CD8-positive, alpha-beta T cell (primary cell): ENCODE measurements at regions of chr7 and their contacts with region 1.

Region 1: DNA sequence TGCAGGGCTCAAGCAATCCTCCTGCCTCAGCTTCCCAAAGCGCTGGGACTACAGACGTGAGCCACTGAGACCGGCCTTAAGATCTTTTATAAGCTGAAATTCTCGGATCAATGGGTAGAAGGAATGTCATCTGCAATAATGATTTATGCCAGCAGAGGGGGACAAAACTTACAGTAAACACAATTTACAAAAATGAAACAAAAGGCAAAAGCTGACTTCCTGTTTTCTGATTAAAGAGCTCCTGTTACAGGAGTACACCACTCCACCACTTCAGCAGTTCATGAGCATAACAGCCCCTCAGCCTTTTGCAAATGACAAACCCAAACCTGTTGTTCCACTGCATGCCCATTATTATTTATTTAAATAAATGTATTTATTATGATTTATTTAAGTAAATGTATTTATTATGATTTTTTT is 88.5 kb upstream of the ATP6V0A4 start:
- DNase-seq: peak in 6 of 9 experiments; percentile 15 to 84 (median 50)
- ATAC-seq: peak; percentile 93
- H3K4me3 ChIP-seq: no peak overlapping the region
- H3K4me3 Mint-ChIP-seq: peak overlapping the region; percentile 20
- H3K27ac ChIP-seq: peak overlapping the region in 1 of 2 experiments; percentile 5
- H3K27ac Mint-ChIP-seq: peak overlapping the region; percentile 78
- H3K4me1 ChIP-seq: peaks cover 3% of the 10 kb centered on the region
- H3K4me1 Mint-ChIP-seq: peaks cover 12% of the 10 kb centered on the region
- H3K27me3 ChIP-seq: no peaks in the 10 kb centered on the region
- H3K27me3 Mint-ChIP-seq: no peaks in the 10 kb centered on the region
- CTCF ChIP-seq: peak; percentile 72

Region 2: GRCh38 chr7:138875794-138876193 is 10.7 kb before region 1 on chr7:
- CTCF ChIA-PET with region 1: interaction called, 12 read pairs
- POLR2A ChIA-PET with region 1: interaction called, 4 read pairs
- intact Hi-C with region 1: no loop called
- DNase-seq: peak; percentile 21 to 90 (median 61)
- ATAC-seq: peak; percentile 96
- H3K4me3 ChIP-seq: no peak overlapping the region
- H3K4me3 Mint-ChIP-seq: no peak overlapping the region
- H3K27ac ChIP-seq: no peak overlapping the region
- H3K27ac Mint-ChIP-seq: peak overlapping the region; percentile 64
- H3K4me1 ChIP-seq: peaks cover 11% of the 10 kb centered on the region
- H3K4me1 Mint-ChIP-seq: peaks cover 15% of the 10 kb centered on the region
- H3K27me3 ChIP-seq: no peaks in the 10 kb centered on the region
- H3K27me3 Mint-ChIP-seq: no peaks in the 10 kb centered on the region
- CTCF ChIP-seq: no peak

Region 3: DNA sequence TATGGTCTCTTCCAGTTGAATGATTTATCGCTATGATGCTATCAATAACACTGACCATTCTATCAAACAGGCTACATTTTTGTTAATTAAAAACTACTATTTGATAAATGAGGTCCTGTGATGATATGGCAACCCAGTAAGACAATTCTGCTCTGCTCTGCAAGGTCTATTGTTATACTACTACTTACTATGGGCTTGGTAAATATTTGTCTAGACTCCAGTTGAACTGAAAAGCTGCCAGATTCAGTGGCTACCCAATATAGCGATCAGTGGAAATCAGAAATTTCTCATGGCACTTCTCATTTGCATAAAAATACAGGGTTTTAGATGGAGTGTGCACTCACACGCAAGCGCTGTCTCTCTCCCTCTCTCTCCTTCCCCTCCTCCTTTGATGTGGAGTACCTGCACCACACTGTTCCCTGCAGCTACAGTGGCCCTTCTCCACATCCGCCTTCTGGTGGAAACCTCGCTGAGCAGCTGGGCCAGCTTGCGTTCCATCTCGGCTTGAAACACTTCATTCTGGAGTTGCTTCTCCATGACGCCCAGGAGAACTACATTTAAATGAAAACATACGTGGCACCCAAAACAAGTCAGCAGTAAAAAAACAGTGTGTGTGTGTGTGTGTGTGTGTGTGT is 16.8 kb after region 1 on chr7:
- CTCF ChIA-PET with region 1: interaction called, 42 read pairs
- POLR2A ChIA-PET with region 1: interaction called, 10 read pairs
- intact Hi-C with region 1: loop called (anchors 1 to 2 kb)
- DNase-seq: peak; percentile 34 to 89 (median 71)
- ATAC-seq: peak; percentile 94
- H3K4me3 ChIP-seq: peak overlapping the region in 1 of 2 experiments; percentile 20
- H3K4me3 Mint-ChIP-seq: peak overlapping the region; percentile 78
- H3K27ac ChIP-seq: no peak overlapping the region
- H3K27ac Mint-ChIP-seq: peak overlapping the region; percentile 90
- H3K4me1 ChIP-seq: peaks cover 39% of the 10 kb centered on the region
- H3K4me1 Mint-ChIP-seq: peaks cover 49% of the 10 kb centered on the region
- H3K27me3 ChIP-seq: peaks cover 0 to 2% of the 10 kb centered on the region in 2 experiments
- H3K27me3 Mint-ChIP-seq: peaks cover 12% of the 10 kb centered on the region
- CTCF ChIP-seq: no peak

Region 4: GRCh38 chr7:139043823-139044812 is 157.6 kb after region 1 on chr7:
- CTCF ChIA-PET with region 1: interaction called, 7 read pairs
- POLR2A ChIA-PET with region 1: no interaction called
- intact Hi-C with region 1: loop called in 1 of 2 experiments (anchors 10 kb)
- DNase-seq: peak; percentile 43 to 83 (median 78)
- ATAC-seq: peak; percentile 75
- H3K4me3 ChIP-seq: no peak overlapping the region
- H3K4me3 Mint-ChIP-seq: peak overlapping the region; percentile 24
- H3K27ac ChIP-seq: peak overlapping the region in 1 of 2 experiments; percentile 59
- H3K27ac Mint-ChIP-seq: peak overlapping the region; percentile 89
- H3K4me1 ChIP-seq: peaks cover 24% of the 10 kb centered on the region
- H3K4me1 Mint-ChIP-seq: peaks cover 61% of the 10 kb centered on the region
- H3K27me3 ChIP-seq: no peaks in the 10 kb centered on the region
- H3K27me3 Mint-ChIP-seq: no peaks in the 10 kb centered on the region
- CTCF ChIP-seq: no peak

Region 5: DNA sequence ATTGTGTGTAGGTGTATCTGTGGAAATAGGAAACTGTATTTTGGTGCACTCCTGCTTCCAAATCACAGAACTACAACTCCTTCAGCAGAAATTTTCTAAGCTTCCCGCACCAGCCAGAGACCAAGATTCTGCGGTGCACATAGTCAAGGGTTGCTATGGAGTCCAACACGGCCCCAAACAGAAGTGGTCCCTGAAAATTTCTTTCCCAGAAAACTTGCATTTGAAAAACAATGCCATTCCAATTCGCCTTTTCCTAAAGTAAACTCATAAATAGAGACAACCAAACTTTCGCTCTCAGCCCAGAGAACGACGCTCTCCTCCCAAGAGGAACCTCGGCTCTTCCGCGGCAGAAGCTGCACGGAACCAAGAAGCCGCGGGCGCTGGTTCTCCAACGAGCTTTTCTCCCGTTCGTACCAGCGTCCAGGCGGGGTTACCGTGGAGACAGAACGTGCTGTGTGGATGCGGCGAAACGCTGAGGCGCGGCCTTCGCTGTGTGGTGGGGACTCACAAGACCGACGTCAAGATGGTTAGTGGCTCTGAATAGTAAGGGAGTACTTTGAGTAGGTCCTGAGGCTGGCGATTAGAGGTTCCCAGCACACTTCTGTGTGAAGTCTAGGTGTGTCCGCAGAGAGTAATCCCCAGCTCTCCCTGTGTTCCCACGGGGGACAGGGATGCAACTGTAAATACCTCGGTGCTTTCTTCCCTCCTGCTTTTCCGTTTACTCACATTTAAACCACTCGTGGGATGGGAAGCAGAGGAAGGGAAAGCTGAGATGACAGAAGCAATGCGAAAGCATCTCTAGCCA is 247.0 kb after region 1 on chr7:
- CTCF ChIA-PET with region 1: interaction called, 34 read pairs
- POLR2A ChIA-PET with region 1: no interaction called
- intact Hi-C with region 1: loop called in 1 of 2 experiments (anchors 5 kb)
- DNase-seq: peak; percentile 81 to 94 (median 89)
- ATAC-seq: peak; percentile 98
- H3K4me3 ChIP-seq: peak overlapping the region; percentile 60 to 63
- H3K4me3 Mint-ChIP-seq: peak overlapping the region; percentile 87
- H3K27ac ChIP-seq: peak overlapping the region; percentile 62 to 63
- H3K27ac Mint-ChIP-seq: peak overlapping the region; percentile 83
- H3K4me1 ChIP-seq: peaks cover 7% of the 10 kb centered on the region
- H3K4me1 Mint-ChIP-seq: peaks cover 13% of the 10 kb centered on the region
- H3K27me3 ChIP-seq: no peaks in the 10 kb centered on the region
- H3K27me3 Mint-ChIP-seq: no peaks in the 10 kb centered on the region
- CTCF ChIP-seq: no peak

Region 6: DNA sequence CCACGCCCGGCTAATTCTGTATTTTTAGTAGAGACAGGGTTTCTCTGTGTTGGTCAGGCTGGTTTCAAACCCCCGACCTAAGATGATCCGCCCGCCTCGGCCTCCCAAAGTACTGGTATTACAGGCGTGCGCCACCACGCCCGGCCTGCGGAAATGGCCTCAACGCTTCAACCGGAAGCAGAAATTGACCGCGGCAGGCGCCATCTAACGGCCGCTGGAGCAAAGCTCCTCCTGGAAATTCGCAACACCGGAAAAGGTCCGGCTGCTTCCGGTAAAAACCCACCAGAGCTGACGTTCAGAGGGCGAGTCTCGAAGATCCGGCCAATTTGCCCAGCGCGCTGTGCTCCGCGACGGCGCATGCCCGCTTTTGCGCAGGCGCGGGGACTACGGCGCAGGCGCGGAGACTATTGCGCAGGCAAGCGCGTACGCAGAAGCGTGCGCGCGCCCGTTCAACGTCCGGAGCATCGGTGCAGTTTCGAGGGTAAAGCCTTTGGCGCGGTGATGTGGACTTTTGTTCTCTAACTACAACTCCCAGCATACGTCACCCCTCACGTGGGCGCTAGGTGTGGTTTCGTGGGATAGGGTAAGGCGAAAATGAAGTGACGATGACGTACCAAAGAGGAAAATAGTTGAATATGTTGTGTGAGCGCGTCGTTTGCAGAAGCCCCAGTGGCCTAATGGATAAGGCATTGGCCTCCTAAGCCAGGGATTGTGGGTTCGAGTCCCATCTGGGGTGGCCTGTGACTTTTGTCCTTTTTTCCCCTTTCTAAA is 453.7 kb after region 1 on chr7:
- CTCF ChIA-PET with region 1: no interaction called
- POLR2A ChIA-PET with region 1: no interaction called
- intact Hi-C with region 1: no loop called
- DNase-seq: peak; percentile 95 to 100 (median 97)
- ATAC-seq: peak; percentile 80
- H3K4me3 ChIP-seq: peak overlapping the region; percentile 69 to 85
- H3K4me3 Mint-ChIP-seq: peak overlapping the region; percentile 98
- H3K27ac ChIP-seq: peak overlapping the region; percentile 94 to 98
- H3K27ac Mint-ChIP-seq: peak overlapping the region; percentile 100
- H3K4me1 ChIP-seq: peaks cover 13% of the 10 kb centered on the region
- H3K4me1 Mint-ChIP-seq: peaks cover 32% of the 10 kb centered on the region
- H3K27me3 ChIP-seq: no peaks in the 10 kb centered on the region
- H3K27me3 Mint-ChIP-seq: peaks cover 2% of the 10 kb centered on the region
- CTCF ChIP-seq: peak; percentile 36

Region 7: GRCh38 chr7:139393621-139394211 is 507.2 kb after region 1 on chr7:
- CTCF ChIA-PET with region 1: no interaction called
- POLR2A ChIA-PET with region 1: no interaction called
- intact Hi-C with region 1: no loop called
- DNase-seq: no peak
- ATAC-seq: peak; percentile 40
- H3K4me3 ChIP-seq: no peak overlapping the region
- H3K4me3 Mint-ChIP-seq: no peak overlapping the region
- H3K27ac ChIP-seq: peak overlapping the region in 1 of 2 experiments; percentile 21
- H3K27ac Mint-ChIP-seq: peak overlapping the region; percentile 62
- H3K4me1 ChIP-seq: peaks cover 33% of the 10 kb centered on the region
- H3K4me1 Mint-ChIP-seq: peaks cover 58% of the 10 kb centered on the region
- H3K27me3 ChIP-seq: no peaks in the 10 kb centered on the region
- H3K27me3 Mint-ChIP-seq: no peaks in the 10 kb centered on the region
- CTCF ChIP-seq: no peak